ENCODE measurements at regions of chr11 and their contacts with region 1.

Region 1: DNA sequence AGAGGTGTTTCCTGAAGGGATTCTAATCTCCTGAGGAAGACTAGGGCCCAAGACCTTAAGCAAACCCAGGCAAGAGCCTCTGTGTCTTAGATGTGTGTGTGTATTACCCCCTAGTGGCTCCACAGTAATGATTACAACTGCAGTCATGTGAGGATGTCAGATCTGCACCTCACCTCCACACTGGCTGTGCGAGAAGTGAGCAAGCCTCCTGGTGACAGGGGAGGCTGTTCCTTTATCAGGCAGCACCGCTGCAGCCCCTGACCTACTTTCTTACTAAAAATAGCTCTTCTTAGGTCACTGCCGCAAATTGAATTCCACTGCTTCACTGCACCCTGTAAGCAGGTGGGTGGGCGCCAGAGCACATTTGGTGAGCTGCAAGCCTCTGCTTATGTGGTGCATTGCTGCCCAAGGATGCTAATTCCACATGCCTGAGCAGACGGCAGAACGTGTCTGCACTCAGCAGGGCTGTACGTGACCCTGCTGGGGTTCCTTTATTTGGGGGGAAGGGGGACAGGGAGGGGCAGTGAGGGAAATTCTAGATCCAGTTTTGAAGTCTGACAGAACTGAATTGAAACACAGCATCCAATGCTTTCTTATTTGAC is 112.4 kb downstream of the KCNC1 start:
- DNase-seq: peak in 4 of 5 donors; percentile 10 to 47 (median 32)
- ATAC-seq: peak in 3 of 4 donors; percentile 81 to 86 (median 83)
- H3K4me3 ChIP-seq: no peak overlapping the region
- H3K27ac ChIP-seq: no peak overlapping the region
- H3K4me1 ChIP-seq: peaks cover 0 to 13% (median 5%) of the 10 kb centered on the region in 12 donors
- H3K27me3 ChIP-seq: no peaks in the 10 kb centered on the region
- CTCF ChIP-seq: peak in 8 of 12 donors; percentile 8 to 46 (median 32)
- POLR2A ChIP-seq: no peak

Region 2: GRCh38 chr11:17598700-17599459 is 248.1 kb before region 1 on chr11:
- intact Hi-C with region 1: loop called in 2 of 10 experiments (anchors 5 to 10 kb)
- DNase-seq: peak; percentile 51 to 77 (median 67)
- ATAC-seq: peak; percentile 37 to 90 (median 78)
- H3K4me3 ChIP-seq: no peak overlapping the region
- H3K27ac ChIP-seq: no peak overlapping the region
- H3K4me1 ChIP-seq: no peaks in the 10 kb centered on the region
- H3K27me3 ChIP-seq: peaks cover 0 to 13% (median 0%) of the 10 kb centered on the region in 9 donors
- CTCF ChIP-seq: peak; percentile 78 to 94 (median 90)
- POLR2A ChIP-seq: no peak

Region 3: GRCh38 chr11:17730608-17731462 is 116.1 kb before region 1 on chr11:
- intact Hi-C with region 1: loop called in 3 of 10 experiments (anchors 5 to 10 kb)
- DNase-seq: peak; percentile 77 to 85 (median 84)
- ATAC-seq: peak; percentile 90 to 94 (median 92)
- H3K4me3 ChIP-seq: no peak overlapping the region
- H3K27ac ChIP-seq: no peak overlapping the region
- H3K4me1 ChIP-seq: peaks cover 2 to 20% (median 7%) of the 10 kb centered on the region in 12 donors
- H3K27me3 ChIP-seq: peaks cover 2 to 44% (median 11%) of the 10 kb centered on the region in 9 donors
- CTCF ChIP-seq: peak; percentile 73 to 91 (median 86)
- POLR2A ChIP-seq: no peak

Region 4: GRCh38 chr11:17760102-17761029 is 86.6 kb before region 1 on chr11:
- intact Hi-C with region 1: loop called in 1 of 10 experiments (anchors 10 kb)
- DNase-seq: peak in 4 of 5 donors; percentile 30 to 63 (median 52)
- ATAC-seq: peak; percentile 67 to 93 (median 86)
- H3K4me3 ChIP-seq: no peak overlapping the region
- H3K27ac ChIP-seq: no peak overlapping the region
- H3K4me1 ChIP-seq: peaks cover 0 to 5% (median 0%) of the 10 kb centered on the region in 12 donors
- H3K27me3 ChIP-seq: no peaks in the 10 kb centered on the region
- CTCF ChIP-seq: peak; percentile 39 to 73 (median 62)
- POLR2A ChIP-seq: no peak

Region 5: GRCh38 chr11:17770048-17770652 is 76.8 kb before region 1 on chr11:
- intact Hi-C with region 1: loop called in 3 of 10 experiments (anchors 2 to 10 kb)
- DNase-seq: no peak
- ATAC-seq: no peak
- H3K4me3 ChIP-seq: no peak overlapping the region
- H3K27ac ChIP-seq: no peak overlapping the region
- H3K4me1 ChIP-seq: no peaks in the 10 kb centered on the region
- H3K27me3 ChIP-seq: no peaks in the 10 kb centered on the region
- CTCF ChIP-seq: peak in 1 of 12 donors; percentile 3
- POLR2A ChIP-seq: no peak

Region 6: GRCh38 chr11:17978553-17979287 is 131.8 kb after region 1 on chr11:
- intact Hi-C with region 1: loop called in 5 of 10 experiments (anchors 5 to 10 kb)
- DNase-seq: peak; percentile 16 to 64 (median 45)
- ATAC-seq: peak; percentile 49 to 86 (median 80)
- H3K4me3 ChIP-seq: no peak overlapping the region
- H3K27ac ChIP-seq: no peak overlapping the region
- H3K4me1 ChIP-seq: peaks cover 0 to 10% (median 3%) of the 10 kb centered on the region in 12 donors
- H3K27me3 ChIP-seq: no peaks in the 10 kb centered on the region
- CTCF ChIP-seq: peak; percentile 51 to 84 (median 68)
- POLR2A ChIP-seq: no peak

Measured in heart left ventricle (tissue), 16 donors.